KBM-7 (cell line): ENCODE measurements at regions of chr15 and their contacts with region 1.

Region 1: DNA sequence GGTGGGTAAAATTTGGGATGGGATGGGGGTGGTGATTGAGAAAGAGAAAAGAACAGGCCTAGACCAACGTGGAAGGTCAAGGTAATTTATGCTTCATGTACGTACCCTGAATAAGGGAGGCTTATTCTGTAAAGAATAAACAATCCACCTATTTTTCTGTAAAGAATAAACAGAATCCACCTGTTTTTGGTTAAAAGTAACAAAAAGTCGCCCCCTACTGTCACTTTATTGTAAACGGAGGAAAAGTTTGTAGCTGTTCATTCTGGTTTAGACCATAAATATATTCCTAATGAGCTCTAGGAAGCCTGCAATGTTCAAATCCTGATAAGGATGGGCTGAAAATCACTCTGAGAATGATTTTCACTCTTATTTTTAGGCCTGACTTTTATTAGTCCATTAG is 23.5 kb upstream of the SQOR start:
- DNase-seq: peak; percentile 48

Region 2: DNA sequence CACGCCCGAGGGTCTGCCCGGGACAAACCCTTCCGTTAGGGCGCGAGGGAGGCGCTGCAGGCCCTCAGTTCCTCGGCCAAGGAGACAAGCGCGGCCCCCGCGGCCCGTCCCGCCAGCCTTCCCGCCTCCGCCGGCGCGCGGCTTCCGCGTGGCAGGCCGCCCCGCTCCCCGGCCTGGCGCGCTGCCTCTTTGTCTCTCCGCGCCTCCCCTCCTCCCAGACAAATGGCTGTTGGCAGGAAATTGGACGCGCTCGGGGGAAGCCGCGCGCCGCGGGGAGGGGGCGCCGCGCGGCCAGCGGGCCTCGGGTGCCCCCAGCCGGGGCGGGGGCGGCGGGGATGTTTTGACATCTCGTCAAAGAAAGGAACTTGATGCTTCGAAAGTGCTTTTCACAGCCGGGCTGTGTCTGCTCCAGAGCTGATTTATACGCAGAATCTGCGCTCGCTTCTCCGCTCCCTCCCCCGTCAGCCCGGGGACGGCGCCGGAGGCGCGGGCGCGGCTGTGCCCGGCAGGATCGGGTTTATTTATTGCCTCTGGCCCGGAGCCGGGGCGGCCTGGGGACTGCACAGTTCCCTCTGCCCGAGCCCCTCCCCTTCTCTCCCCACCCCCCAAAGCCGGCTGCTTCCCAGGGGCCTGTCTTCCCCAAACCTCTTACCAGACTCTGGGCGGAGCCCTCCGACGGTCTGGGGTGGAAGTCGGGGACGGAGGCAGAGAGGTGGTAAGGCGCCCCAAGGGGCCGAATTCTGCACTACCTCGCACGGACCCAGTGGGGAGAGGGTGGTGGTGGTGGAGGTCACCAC is 444.3 kb before region 1 on chr15:
- in situ Hi-C with region 1: loop called (anchors 25 kb)
- DNase-seq: peak; percentile 90

Region 3: DNA sequence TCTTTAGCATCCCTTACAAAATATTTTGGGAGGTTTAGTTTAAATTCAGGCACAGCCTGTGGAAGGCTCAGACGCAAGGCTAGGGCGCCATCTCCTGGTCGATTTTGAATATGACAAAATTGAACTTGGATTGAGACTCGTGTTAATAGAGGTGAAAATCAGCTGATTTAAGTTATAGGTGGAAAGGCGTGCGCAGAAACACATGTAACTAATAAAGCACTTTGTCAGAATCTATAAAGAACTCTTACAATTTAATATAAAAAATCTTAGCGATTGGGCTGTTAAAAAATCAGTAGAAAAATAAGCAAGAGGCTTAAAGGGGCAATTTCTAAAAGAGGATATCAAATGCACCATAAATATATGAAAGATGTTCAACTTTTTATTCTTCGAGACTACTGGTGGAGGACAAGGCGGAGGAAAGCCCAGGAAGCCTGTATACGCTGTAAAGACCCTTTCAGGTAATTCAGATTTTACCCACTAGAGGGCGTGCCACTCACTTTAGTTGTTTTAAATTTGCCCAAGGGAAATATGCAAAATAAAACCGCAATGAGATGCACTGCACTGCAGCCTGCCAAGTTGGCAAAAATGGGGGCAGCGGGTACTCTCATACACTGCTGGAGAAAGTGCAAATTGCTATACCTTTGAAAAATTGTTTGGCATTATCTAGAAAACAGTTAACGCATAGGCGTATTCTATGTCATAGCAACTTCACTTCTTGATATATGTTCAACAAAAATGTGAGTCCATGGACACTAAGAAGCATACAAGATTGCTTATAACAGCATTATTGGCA is 153.5 kb before region 1 on chr15:
- in situ Hi-C with region 1: loop called (anchors 10 kb)
- DNase-seq: peak; percentile 90

Region 4: GRCh38 chr15:45555934-45556608 is 55.2 kb before region 1 on chr15:
- in situ Hi-C with region 1: no loop called
- DNase-seq: no peak

Region 5: GRCh38 chr15:45919806-45920205 is 308.5 kb after region 1 on chr15:
- in situ Hi-C with region 1: no loop called
- DNase-seq: no peak